B cell (primary cell): ENCODE measurements at regions of chr1 and their contacts with region 1.

Region 1: DNA sequence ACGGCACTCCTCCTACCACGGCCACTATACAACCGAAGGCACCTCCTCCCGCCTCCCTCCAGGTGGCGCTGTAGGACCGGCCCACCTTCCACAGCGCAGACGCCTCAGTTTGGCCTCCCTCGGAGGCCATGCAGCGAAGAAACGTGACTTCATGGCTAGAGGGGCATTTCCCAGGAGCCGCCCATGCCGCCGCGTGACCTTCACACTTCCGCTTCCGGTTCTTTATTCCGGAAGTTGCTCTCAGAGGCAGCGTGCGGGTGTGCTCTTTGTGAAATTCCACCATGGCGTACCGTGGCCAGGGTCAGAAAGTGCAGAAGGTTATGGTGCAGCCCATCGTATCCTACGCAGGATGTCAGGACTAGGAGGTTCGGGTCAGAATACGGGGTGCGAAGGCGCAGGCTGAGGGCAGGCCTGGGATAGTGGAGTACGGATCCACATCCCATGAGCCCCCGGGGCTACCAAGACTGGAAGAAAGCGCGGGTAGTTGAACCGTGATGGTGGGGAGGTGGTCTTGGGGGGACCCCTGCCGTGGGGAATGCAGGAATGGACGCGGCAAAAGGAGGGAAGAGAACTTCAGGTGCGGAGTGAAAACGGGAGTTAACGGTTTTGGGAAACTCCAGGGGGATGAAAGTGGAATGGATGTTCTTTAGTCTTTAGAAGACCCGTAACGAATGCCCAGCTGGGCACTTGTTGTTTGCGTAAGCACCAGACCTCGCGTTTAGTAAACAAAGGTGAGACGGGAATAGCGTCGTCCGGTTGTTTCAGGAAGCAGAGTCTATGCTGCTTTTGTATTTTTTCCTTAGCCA is at the start of gene SNRPE:
- DNase-seq: peak; percentile 98
- ATAC-seq: peak; percentile 99
- H3K4me3 ChIP-seq: peak within 1 kb of the TSS; percentile 82 to 99 (median 96)
- H3K4me3 Mint-ChIP-seq: peak within 1 kb of the TSS; percentile 98
- H3K27ac ChIP-seq: peak within 1 kb of the TSS; percentile 57 to 81
- H3K27ac Mint-ChIP-seq: peak within 1 kb of the TSS; percentile 96
- H3K4me1 ChIP-seq: peaks cover 9 to 17% of the 10 kb centered on the region in 2 donors
- H3K4me1 Mint-ChIP-seq: peaks cover 21% of the 10 kb centered on the region
- H3K27me3 ChIP-seq: no peaks in the 10 kb centered on the region
- H3K27me3 Mint-ChIP-seq: no peaks in the 10 kb centered on the region
- CTCF ChIP-seq: peak; percentile 93
- total RNA-seq, gene SNRPE: 56.0 and 80.8 TPM in 2 replicates

Region 2: GRCh38 chr1:203795441-203796235 is 65.9 kb before region 1 on chr1 and contains the starts of genes ZBED6 and ZC3H11A:
- CTCF ChIA-PET with region 1: interaction called, 3 read pairs
- POLR2A ChIA-PET with region 1: no interaction called
- intact Hi-C with region 1: loop called (anchors 1 kb)
- DNase-seq: peak; percentile 99
- ATAC-seq: peak; percentile 98
- H3K4me3 ChIP-seq: peak within 1 kb of the TSS; percentile 62 to 86 (median 78)
- H3K4me3 Mint-ChIP-seq: peak within 1 kb of the TSS; percentile 88
- H3K27ac ChIP-seq: peak within 1 kb of the TSS; percentile 85 to 94
- H3K27ac Mint-ChIP-seq: peak within 1 kb of the TSS; percentile 97
- H3K4me1 ChIP-seq: peaks cover 37% of the 10 kb centered on the region in 2 donors
- H3K4me1 Mint-ChIP-seq: peaks cover 49% of the 10 kb centered on the region
- H3K27me3 ChIP-seq: no peaks in the 10 kb centered on the region
- H3K27me3 Mint-ChIP-seq: no peaks in the 10 kb centered on the region
- CTCF ChIP-seq: no peak
- total RNA-seq, gene ZBED6: 39.7 and 40.0 TPM in 2 replicates
- total RNA-seq, gene ZC3H11A: 117 and 130 TPM in 2 replicates

Region 3: DNA sequence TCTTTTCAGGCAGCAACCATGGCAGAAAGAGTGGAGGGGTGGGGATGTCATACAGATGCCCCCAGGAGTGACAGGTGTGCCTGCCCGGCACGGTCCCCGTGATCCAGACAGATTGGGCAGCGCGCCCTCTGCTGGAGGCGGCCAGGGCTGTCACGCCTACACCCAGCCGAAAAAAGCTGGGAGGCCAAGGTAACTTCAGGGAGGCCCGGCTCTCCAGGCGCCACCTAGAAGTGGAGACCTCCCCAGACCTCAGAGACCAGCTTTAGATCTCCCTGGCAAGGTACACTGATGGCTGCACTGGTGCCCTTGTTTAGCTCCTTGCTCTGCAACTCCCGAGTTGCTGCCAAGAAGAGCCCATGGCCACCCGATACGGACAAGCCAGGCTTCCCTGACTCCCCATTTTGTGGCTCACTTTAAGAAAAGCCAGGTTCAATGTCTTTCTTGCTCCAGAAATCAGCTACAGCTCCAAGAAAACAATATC is 345.6 kb after region 1 on chr1:
- CTCF ChIA-PET with region 1: no interaction called
- POLR2A ChIA-PET with region 1: no interaction called
- intact Hi-C with region 1: loop called (anchors 1 kb)
- DNase-seq: peak; percentile 71
- ATAC-seq: peak; percentile 78
- H3K4me3 ChIP-seq: no peak overlapping the region
- H3K4me3 Mint-ChIP-seq: no peak overlapping the region
- H3K27ac ChIP-seq: no peak overlapping the region
- H3K27ac Mint-ChIP-seq: no peak overlapping the region
- H3K4me1 ChIP-seq: peaks cover 0 to 6% of the 10 kb centered on the region in 2 donors
- H3K4me1 Mint-ChIP-seq: no peaks in the 10 kb centered on the region
- H3K27me3 ChIP-seq: peaks cover 0 to 21% (median 13%) of the 10 kb centered on the region in 4 experiments
- H3K27me3 Mint-ChIP-seq: peaks cover 32% of the 10 kb centered on the region
- CTCF ChIP-seq: peak; percentile 92

Region 4: GRCh38 chr1:204411451-204412204 is 550.0 kb after region 1 on chr1 and contains the start of gene PPP1R15B:
- CTCF ChIA-PET with region 1: no interaction called
- POLR2A ChIA-PET with region 1: no interaction called
- intact Hi-C with region 1: loop called (anchors 2 kb)
- DNase-seq: peak; percentile 100
- ATAC-seq: peak; percentile 91
- H3K4me3 ChIP-seq: peak within 1 kb of the TSS; percentile 80 to 100 (median 92)
- H3K4me3 Mint-ChIP-seq: peak within 1 kb of the TSS; percentile 99
- H3K27ac ChIP-seq: peak within 1 kb of the TSS; percentile 98 to 99
- H3K27ac Mint-ChIP-seq: peak within 1 kb of the TSS; percentile 99
- H3K4me1 ChIP-seq: peaks cover 8 to 24% of the 10 kb centered on the region in 2 donors
- H3K4me1 Mint-ChIP-seq: peaks cover 36% of the 10 kb centered on the region
- H3K27me3 ChIP-seq: no peaks in the 10 kb centered on the region
- H3K27me3 Mint-ChIP-seq: no peaks in the 10 kb centered on the region
- CTCF ChIP-seq: no peak
- total RNA-seq, gene PPP1R15B: 65.7 and 68.0 TPM in 2 replicates